K562 (cell line): ENCODE measurements at regions of chr9 and their contacts with region 1.

Region 1: DNA sequence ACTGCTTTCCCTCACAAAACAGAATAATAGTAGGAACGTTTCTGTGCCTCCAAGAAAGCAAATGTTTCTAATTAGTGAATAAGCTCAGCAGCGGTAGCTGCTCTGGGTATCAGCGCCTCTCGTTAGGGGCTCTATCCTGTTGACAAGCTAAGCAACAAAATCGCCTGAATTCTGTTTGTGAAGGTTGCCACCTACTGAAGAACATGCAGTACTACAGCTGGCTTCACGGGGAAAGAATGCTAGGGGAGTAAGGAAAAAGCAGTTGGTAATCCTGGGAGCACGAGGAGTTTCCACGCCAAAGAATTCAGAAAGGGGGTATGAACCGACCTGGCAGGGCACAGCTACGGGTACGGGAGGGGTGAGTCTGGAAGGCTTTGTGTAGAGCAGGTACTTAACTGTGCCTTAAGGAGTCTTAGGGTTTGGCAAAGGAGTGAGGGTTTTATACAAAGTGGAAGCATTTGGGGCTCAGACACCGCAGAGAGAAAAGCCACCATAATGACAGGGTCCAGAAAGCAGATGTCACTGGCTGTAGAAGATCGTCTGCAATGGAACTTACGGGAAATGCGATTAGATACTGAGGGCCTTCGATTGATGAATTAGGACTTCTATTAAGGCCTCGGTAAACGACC is 171.7 kb downstream of the TTC39B start:
- DNase-seq: peak; percentile 32 to 61 (median 40)
- ATAC-seq: peak; percentile 88
- H3K4me3 ChIP-seq: no peak overlapping the region
- H3K27ac ChIP-seq: no peak overlapping the region
- H3K4me1 ChIP-seq: no peaks in the 10 kb centered on the region; a peak in 1 of 5 replicates
- H3K27me3 ChIP-seq: no peaks in the 10 kb centered on the region
- CTCF ChIP-seq: peak; percentile 59 to 74 (median 73)
- EP300 ChIP-seq: no peak
- POLR2A ChIP-seq: no peak
- RAD21 ChIP-seq: peak; percentile 68 to 75

Region 2: GRCh38 chr9:14428781-14429230 is 706.5 kb before region 1 on chr9:
- CTCF ChIA-PET with region 1: no interaction called
- POLR2A ChIA-PET with region 1: no interaction called
- in situ Hi-C with region 1: loop called (anchors 25 kb)
- intact Hi-C with region 1: no loop called
- DNase-seq: peak; percentile 50 to 78 (median 58)
- ATAC-seq: peak; percentile 87
- H3K4me3 ChIP-seq: no peak overlapping the region
- H3K27ac ChIP-seq: no peak overlapping the region
- H3K4me1 ChIP-seq: peaks cover 0 to 19% of the 10 kb centered on the region in 2 experiments; a peak in 3 of 5 replicates
- H3K27me3 ChIP-seq: no peaks in the 10 kb centered on the region
- CTCF ChIP-seq: peak; percentile 56 to 76 (median 63)
- EP300 ChIP-seq: no peak
- POLR2A ChIP-seq: no peak
- RAD21 ChIP-seq: peak in 1 of 2 experiments; percentile 45; a peak in 2 of 4 replicates

Region 3: GRCh38 chr9:14466429-14466818 is 668.9 kb before region 1 on chr9:
- CTCF ChIA-PET with region 1: no interaction called
- POLR2A ChIA-PET with region 1: no interaction called
- in situ Hi-C with region 1: no loop called
- intact Hi-C with region 1: loop called (anchors 10 kb)
- DNase-seq: no peak
- ATAC-seq: no peak
- H3K4me3 ChIP-seq: no peak overlapping the region
- H3K27ac ChIP-seq: no peak overlapping the region
- H3K4me1 ChIP-seq: no peaks in the 10 kb centered on the region; a peak in 1 of 5 replicates
- H3K27me3 ChIP-seq: no peaks in the 10 kb centered on the region
- CTCF ChIP-seq: no peak
- EP300 ChIP-seq: no peak
- POLR2A ChIP-seq: no peak
- RAD21 ChIP-seq: no peak

Region 4: GRCh38 chr9:14661421-14662059 is 473.7 kb before region 1 on chr9:
- CTCF ChIA-PET with region 1: no interaction called
- POLR2A ChIA-PET with region 1: no interaction called
- in situ Hi-C with region 1: loop called (anchors 25 kb)
- intact Hi-C with region 1: no loop called
- DNase-seq: peak in 3 of 4 experiments; percentile 4 to 32 (median 10)
- ATAC-seq: peak; percentile 69
- H3K4me3 ChIP-seq: no peak overlapping the region
- H3K27ac ChIP-seq: no peak overlapping the region
- H3K4me1 ChIP-seq: no peaks in the 10 kb centered on the region
- H3K27me3 ChIP-seq: no peaks in the 10 kb centered on the region
- CTCF ChIP-seq: peak in 2 of 3 experiments; percentile 41 to 69; a peak in 3 of 6 replicates
- EP300 ChIP-seq: no peak
- POLR2A ChIP-seq: no peak
- RAD21 ChIP-seq: peak; percentile 52 to 74

Region 5: DNA sequence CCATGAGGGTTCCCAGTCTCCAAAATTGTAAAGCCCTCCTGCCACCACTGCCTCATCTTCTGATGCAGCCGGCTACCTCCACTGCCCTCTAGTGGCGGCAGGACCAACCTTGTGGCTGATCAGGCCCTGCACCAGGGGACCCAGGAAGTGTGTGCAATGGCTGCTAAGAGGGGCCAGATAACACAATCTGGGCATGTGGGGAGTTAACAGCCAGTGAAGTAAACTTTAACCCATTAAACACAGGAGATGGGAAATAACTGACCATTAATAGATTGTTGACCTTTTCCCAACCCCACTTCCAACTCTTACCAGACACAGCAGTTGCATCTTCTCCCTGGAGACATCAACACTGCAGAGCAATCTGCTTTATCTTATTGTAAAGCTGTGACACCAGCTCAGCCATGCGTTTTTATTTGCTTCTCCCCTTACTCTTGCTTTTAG is 288.4 kb before region 1 on chr9:
- CTCF ChIA-PET with region 1: no interaction called
- POLR2A ChIA-PET with region 1: no interaction called
- in situ Hi-C with region 1: no loop called
- intact Hi-C with region 1: loop called (anchors 10 kb)
- DNase-seq: peak; percentile 58 to 70 (median 62)
- ATAC-seq: peak; percentile 95
- H3K4me3 ChIP-seq: no peak overlapping the region
- H3K27ac ChIP-seq: no peak overlapping the region
- H3K4me1 ChIP-seq: no peaks in the 10 kb centered on the region
- H3K27me3 ChIP-seq: no peaks in the 10 kb centered on the region; a peak in 1 of 5 replicates
- CTCF ChIP-seq: peak; percentile 62 to 76 (median 74)
- EP300 ChIP-seq: no peak
- POLR2A ChIP-seq: no peak
- RAD21 ChIP-seq: peak; percentile 39 to 55; a peak in 3 of 4 replicates

Region 6: GRCh38 chr9:14906644-14907643 is 228.3 kb before region 1 on chr9:
- CTCF ChIA-PET with region 1: no interaction called
- POLR2A ChIA-PET with region 1: no interaction called
- in situ Hi-C with region 1: no loop called
- intact Hi-C with region 1: no loop called
- DNase-seq: peak in 3 of 4 experiments; percentile 5 to 77 (median 26)
- ATAC-seq: peak; percentile 71
- H3K4me3 ChIP-seq: no peak overlapping the region
- H3K27ac ChIP-seq: no peak overlapping the region
- H3K4me1 ChIP-seq: peaks cover 0 to 11% of the 10 kb centered on the region in 2 experiments; a peak in 3 of 5 replicates
- H3K27me3 ChIP-seq: no peaks in the 10 kb centered on the region; a peak in 1 of 5 replicates
- CTCF ChIP-seq: no peak
- EP300 ChIP-seq: no peak; the same call in 1 of the 2 replicates
- POLR2A ChIP-seq: no peak
- RAD21 ChIP-seq: no peak

Region 7: GRCh38 chr9:15010581-15010980 is 124.7 kb before region 1 on chr9:
- CTCF ChIA-PET with region 1: no interaction called
- POLR2A ChIA-PET with region 1: no interaction called
- in situ Hi-C with region 1: no loop called
- intact Hi-C with region 1: no loop called
- DNase-seq: no peak
- ATAC-seq: no peak
- H3K4me3 ChIP-seq: no peak overlapping the region
- H3K27ac ChIP-seq: no peak overlapping the region
- H3K4me1 ChIP-seq: no peaks in the 10 kb centered on the region
- H3K27me3 ChIP-seq: no peaks in the 10 kb centered on the region
- CTCF ChIP-seq: no peak
- EP300 ChIP-seq: no peak
- POLR2A ChIP-seq: no peak
- RAD21 ChIP-seq: no peak